ENCODE measurements at regions of chr3 and their contacts with region 1.

Region 1: DNA sequence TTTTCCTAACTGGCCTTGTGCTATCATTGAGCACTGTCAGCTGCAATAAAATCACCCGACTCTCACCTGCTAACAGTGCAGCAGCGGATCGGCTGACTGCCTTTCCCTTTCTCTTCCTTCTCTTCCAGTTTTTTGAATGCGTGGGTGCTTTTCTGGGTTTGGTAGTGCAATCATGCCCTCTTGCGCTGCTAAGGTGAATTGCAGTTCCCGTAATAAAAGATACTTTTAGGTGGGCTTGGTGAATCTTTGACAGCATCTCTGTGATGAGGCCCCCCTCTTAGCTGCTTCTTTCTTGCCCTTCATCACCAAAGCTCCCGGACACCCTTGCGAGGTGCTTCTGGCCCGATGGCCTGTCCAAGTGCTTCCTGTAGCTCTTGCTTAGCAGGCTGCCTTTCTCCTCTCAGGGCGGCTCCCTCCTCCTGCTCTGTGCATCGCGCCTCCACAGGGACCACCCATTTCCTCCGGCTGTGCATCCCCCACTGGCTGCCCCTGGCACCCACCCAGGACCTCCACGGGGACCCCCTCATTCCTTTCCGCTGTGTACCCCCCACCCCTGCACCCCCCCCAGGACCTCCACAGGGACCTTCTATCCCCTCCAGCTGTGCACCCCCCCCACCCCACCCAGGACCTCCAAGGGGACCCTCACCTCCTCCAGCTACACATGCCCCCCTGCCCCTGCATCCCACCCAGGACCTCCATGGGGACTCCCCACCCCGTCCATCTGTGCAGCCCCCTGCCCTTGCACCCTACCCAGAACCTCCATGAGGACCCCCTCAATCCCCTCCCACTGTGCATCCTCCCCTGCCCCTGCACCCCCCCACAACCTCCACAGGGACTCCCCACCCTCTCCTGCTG is 50.8 kb upstream of the RPL32 start:
- DNase-seq: no peak
- H3K4me3 ChIP-seq: peak overlapping the region in 3 of 4 donors; percentile 20 to 31 (median 27)
- H3K27ac ChIP-seq: no peak overlapping the region
- H3K4me1 ChIP-seq: peaks cover 0 to 18% (median 10%) of the 10 kb centered on the region in 4 donors
- H3K27me3 ChIP-seq: no peaks in the 10 kb centered on the region
- CTCF ChIP-seq: peak; percentile 92 to 96 (median 94)
- EP300 ChIP-seq: no peak
- POLR2A ChIP-seq: no peak

Region 2: DNA sequence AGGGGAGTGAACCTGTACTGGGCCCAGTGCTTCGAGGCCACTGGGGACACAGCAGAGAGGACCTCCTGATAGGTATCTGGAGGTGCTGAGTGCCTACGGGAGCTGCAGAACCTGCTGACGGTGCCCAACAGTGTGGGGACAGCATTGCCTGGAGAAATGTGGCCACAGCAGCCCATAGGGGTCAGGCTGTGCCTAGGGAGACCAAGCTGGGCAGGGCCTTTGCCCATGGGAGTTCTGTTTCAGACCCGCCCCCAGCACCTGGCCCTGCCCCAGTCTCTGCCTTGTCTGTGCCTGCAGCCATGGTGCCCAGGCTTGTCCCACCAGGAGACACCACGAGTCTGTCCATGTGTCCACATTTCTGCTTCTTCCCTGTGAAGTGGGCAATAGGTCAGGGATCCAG is 35.6 kb before region 1 on chr3:
- intact Hi-C with region 1: loop called (anchors 5 kb)
- DNase-seq: no peak
- H3K4me3 ChIP-seq: no peak overlapping the region
- H3K27ac ChIP-seq: no peak overlapping the region
- H3K4me1 ChIP-seq: no peaks in the 10 kb centered on the region
- H3K27me3 ChIP-seq: no peaks in the 10 kb centered on the region
- CTCF ChIP-seq: no peak
- EP300 ChIP-seq: no peak
- POLR2A ChIP-seq: no peak

Region 3: GRCh38 chr3:12868039-12869034 is 23.9 kb before region 1 on chr3:
- intact Hi-C with region 1: loop called (anchors 1 kb)
- DNase-seq: peak; percentile 92
- H3K4me3 ChIP-seq: peak overlapping the region in 2 of 4 donors; percentile 28 to 32
- H3K27ac ChIP-seq: peak overlapping the region in 1 of 4 donors; percentile 39
- H3K4me1 ChIP-seq: peaks cover 0 to 14% (median 13%) of the 10 kb centered on the region in 4 donors
- H3K27me3 ChIP-seq: no peaks in the 10 kb centered on the region
- CTCF ChIP-seq: peak; percentile 87 to 92 (median 90)
- EP300 ChIP-seq: no peak
- POLR2A ChIP-seq: no peak

Region 4: DNA sequence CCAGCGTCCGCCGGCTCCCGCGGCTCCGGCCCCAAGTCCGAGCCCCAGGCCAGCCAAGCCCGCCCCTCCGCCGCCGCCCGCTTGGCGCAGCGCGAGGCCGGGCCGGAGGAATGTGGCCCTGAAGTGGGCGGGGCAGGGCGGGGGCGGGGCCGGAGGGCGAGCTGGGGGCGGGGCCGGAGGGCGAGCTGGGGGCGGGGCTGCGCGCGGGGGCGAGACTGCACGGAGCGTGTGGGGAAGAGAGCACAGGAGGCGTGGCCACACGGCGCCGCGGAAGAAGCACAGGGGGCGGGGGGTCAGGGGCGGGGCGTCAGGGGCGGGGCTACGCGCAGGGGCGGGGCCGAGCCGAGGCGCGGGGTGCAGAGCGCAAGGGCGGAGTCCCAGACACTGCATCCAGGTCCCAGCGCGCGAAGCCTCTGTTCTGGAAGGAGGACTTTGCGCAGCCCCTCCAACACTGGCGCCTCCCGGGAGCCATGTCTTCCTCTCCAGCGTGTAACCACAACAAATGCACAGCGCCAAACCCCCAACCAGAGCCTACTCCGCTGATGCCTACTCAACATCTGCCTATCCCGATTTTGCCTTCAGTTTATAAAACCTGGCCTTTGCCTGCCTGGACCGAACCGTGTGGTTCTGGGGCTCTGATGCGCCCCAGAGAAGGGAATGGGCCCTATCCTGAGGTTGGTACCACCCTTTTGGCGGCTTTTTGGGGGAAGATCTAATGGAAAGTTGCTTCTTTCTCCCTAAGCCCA is 75.6 kb after region 1 on chr3:
- intact Hi-C with region 1: loop called (anchors 5 kb)
- DNase-seq: peak; percentile 96
- H3K4me3 ChIP-seq: peak overlapping the region; percentile 73 to 97 (median 85)
- H3K27ac ChIP-seq: peak overlapping the region; percentile 82 to 84 (median 82)
- H3K4me1 ChIP-seq: peaks cover 0 to 59% (median 48%) of the 10 kb centered on the region in 4 donors
- H3K27me3 ChIP-seq: no peaks in the 10 kb centered on the region
- CTCF ChIP-seq: no peak
- EP300 ChIP-seq: no peak
- POLR2A ChIP-seq: peak in 1 of 2 donors; percentile 10

Region 5: DNA sequence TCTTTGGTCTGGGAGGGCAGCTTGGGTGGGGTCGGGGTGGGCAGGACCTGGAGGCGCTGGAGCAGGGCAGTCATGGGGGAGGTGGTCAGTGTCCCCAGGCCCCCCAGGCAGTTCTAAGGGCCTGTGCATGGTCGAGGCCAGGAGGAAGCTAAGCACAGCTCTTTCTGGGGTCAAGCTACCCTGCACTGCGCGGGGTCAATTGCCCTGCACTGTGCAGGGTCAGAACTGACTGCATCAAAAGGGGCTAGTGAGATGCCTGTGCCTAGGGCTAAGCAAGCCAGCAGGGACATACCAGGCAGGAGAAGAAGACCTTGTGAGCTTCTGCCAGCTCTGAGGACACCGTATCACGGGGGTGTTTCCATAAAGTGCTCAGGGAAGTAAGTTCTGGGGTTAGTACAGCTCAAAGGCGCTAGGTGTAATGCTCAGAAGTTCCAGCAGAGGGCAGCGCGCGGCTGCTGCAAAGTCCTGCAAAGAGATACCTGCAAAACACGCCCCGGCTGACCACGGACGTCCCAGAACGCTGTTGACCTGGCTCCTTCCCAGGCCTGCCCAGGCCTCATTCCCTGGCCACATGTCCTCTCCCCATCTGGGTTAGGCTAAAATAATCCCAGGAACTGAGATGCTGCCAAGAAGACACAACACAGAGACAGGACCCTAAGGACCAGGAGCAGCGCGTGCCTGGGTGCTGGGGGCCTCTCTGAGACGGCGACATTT is 199.8 kb after region 1 on chr3:
- intact Hi-C with region 1: no loop called
- DNase-seq: peak; percentile 90
- H3K4me3 ChIP-seq: no peak overlapping the region
- H3K27ac ChIP-seq: no peak overlapping the region
- H3K4me1 ChIP-seq: peaks cover 0 to 10% (median 7%) of the 10 kb centered on the region in 4 donors
- H3K27me3 ChIP-seq: peaks cover 0 to 7% (median 0%) of the 10 kb centered on the region in 3 donors
- CTCF ChIP-seq: peak; percentile 66 to 94 (median 87)
- EP300 ChIP-seq: no peak
- POLR2A ChIP-seq: no peak